CD8-positive, alpha-beta T cell (primary cell): ENCODE measurements at regions of chr3 and their contacts with region 1.

Region 1: GRCh38 chr3:84547971-84548970 is 410.5 kb upstream of the CADM2 start:
- DNase-seq: peak in 1 of 9 experiments; percentile 1
- ATAC-seq: no peak
- H3K4me3 ChIP-seq: no peak overlapping the region
- H3K4me3 Mint-ChIP-seq: no peak overlapping the region
- H3K27ac ChIP-seq: no peak overlapping the region
- H3K27ac Mint-ChIP-seq: no peak overlapping the region
- H3K4me1 ChIP-seq: no peaks in the 10 kb centered on the region
- H3K4me1 Mint-ChIP-seq: no peaks in the 10 kb centered on the region
- H3K27me3 ChIP-seq: no peaks in the 10 kb centered on the region
- H3K27me3 Mint-ChIP-seq: no peaks in the 10 kb centered on the region
- CTCF ChIP-seq: no peak

Region 2: DNA sequence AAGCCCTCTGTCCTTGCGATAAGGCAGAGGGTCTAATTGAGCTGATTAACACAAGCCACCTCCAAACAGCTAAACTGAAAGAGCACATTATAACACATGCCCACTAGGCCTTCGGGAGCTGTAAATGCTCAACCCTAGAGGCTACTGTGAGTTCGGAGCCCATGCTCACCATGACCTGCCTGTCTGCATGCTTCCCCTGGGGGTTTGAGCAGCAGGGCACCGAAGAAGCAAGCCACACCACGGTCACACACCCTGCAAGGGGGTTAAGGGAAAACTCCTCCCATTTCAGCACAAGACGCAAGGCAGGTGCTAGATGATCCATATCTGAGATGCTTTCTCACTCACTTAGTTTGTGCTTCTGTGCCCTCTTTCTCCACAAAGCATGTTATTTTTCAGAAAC is 25.4 kb before region 1 on chr3:
- CTCF ChIA-PET with region 1: no interaction called
- POLR2A ChIA-PET with region 1: no interaction called
- intact Hi-C with region 1: no loop called
- DNase-seq: no peak
- ATAC-seq: no peak
- H3K4me3 ChIP-seq: no peak overlapping the region
- H3K4me3 Mint-ChIP-seq: no peak overlapping the region
- H3K27ac ChIP-seq: no peak overlapping the region
- H3K27ac Mint-ChIP-seq: no peak overlapping the region
- H3K4me1 ChIP-seq: no peaks in the 10 kb centered on the region
- H3K4me1 Mint-ChIP-seq: no peaks in the 10 kb centered on the region
- H3K27me3 ChIP-seq: no peaks in the 10 kb centered on the region
- H3K27me3 Mint-ChIP-seq: no peaks in the 10 kb centered on the region
- CTCF ChIP-seq: no peak

Region 3: DNA sequence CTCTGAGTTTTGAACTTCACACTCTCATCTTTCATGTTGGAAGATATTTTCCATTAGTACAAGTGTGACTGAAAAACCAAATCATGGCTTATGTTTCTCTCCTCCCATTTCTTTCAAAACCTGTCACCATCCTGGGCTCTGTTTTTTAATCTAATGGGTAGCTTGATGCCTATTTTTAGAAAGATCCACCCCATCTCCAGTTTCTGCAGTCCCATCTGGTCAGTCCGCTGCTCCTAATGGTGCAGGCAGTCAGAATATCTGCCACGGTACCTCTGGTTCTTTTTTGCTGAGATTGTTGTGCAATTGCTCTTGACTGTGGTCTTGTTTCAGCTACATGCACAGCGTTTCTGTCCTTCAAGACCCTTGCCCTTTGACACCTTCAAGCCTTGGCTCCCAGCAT is 169.6 kb after region 1 on chr3:
- CTCF ChIA-PET with region 1: no interaction called
- POLR2A ChIA-PET with region 1: no interaction called
- intact Hi-C with region 1: no loop called
- DNase-seq: no peak
- ATAC-seq: no peak
- H3K4me3 ChIP-seq: no peak overlapping the region
- H3K4me3 Mint-ChIP-seq: no peak overlapping the region
- H3K27ac ChIP-seq: no peak overlapping the region
- H3K27ac Mint-ChIP-seq: no peak overlapping the region
- H3K4me1 ChIP-seq: no peaks in the 10 kb centered on the region
- H3K4me1 Mint-ChIP-seq: no peaks in the 10 kb centered on the region
- H3K27me3 ChIP-seq: no peaks in the 10 kb centered on the region
- H3K27me3 Mint-ChIP-seq: no peaks in the 10 kb centered on the region
- CTCF ChIP-seq: no peak

Region 4: DNA sequence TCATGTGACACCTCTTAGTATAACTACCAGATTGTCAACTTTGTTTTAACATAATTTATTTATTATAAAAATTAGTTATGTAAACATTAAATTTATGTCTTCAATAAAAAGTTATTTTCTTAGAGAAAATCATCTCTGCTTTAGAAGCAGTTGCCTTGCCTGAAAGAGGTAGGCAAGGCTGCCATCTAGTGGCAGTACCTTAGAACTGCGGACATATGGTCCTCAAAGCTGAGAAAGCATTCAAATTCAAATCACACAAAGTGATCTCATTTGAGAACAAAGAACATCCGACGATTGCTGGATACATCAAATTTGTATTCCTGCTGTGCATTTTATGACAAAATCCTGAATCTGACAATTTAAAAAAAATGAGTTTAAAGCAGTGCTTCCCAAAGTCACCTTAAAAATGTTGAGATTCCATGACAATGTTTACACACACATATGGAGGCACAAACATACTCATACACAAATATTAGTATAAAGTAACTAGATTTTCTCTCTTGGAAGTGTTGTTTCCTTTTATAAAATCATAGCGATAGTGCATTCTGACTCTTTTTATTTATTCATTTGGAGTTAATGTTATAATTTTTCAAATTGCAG is 1027.9 kb after region 1 on chr3:
- CTCF ChIA-PET with region 1: no interaction called
- POLR2A ChIA-PET with region 1: no interaction called
- intact Hi-C with region 1: loop called in 1 of 2 experiments (anchors 5 kb)
- DNase-seq: peak in 5 of 9 experiments; percentile 1 to 45 (median 26)
- ATAC-seq: no peak
- H3K4me3 ChIP-seq: no peak overlapping the region
- H3K4me3 Mint-ChIP-seq: no peak overlapping the region
- H3K27ac ChIP-seq: no peak overlapping the region
- H3K27ac Mint-ChIP-seq: no peak overlapping the region
- H3K4me1 ChIP-seq: no peaks in the 10 kb centered on the region
- H3K4me1 Mint-ChIP-seq: no peaks in the 10 kb centered on the region
- H3K27me3 ChIP-seq: no peaks in the 10 kb centered on the region
- H3K27me3 Mint-ChIP-seq: no peaks in the 10 kb centered on the region
- CTCF ChIP-seq: peak; percentile 76